ENCODE measurements at regions of chr2 and their contacts with region 1.

Region 1: DNA sequence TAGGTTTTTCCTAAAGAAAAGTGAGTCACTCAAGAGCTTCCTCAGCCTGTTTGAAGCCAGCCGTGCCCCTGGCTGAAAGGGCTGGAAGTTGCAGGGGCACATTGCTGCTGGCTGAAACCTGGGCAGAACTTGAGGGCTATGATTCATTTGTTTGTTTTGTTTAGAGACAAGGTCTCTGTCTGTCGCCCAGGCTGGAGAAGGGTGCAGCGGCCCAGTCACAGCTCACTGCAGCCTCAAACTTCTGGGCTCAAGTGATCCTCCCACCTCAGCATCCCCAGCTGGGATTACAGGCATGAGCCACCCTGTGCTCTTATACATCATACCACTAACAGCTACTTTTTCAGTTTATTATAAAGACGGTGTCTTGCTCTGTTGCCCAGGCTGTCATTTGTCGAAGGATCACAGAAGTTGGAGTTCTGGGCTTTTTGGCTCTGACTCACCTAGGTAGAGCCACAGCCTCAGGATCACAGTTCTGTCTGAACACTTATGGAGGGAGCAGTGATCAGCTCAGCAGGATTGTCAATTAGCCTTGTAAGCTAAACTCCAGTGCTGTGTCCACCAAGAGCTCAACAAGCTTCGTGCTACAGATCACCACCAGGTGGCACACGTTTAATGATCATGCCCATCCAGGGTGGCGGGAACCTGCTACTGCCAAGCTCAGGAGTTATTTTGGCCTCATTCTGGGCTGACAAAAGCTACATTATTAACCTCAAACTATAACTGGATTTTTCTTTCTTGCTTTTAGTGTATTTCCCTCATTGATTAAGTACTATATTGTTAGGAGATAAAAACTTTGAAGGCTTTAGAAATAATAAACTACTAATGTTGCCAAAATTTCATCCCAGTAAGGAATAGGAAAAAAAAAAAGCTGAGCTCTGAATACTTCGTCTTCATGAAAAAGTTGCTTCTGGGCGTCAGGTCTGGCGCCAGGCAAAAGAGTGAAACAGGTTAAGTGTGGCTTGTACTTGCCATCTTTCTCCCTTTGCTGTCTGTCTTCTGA is 57.9 kb downstream of the ARHGEF33 start:
- DNase-seq: no peak
- H3K4me3 ChIP-seq: no peak overlapping the region
- H3K27ac ChIP-seq: no peak overlapping the region
- H3K4me1 ChIP-seq: peaks cover 0 to 7% (median 0%) of the 10 kb centered on the region in 4 donors
- H3K27me3 ChIP-seq: no peaks in the 10 kb centered on the region
- CTCF ChIP-seq: peak; percentile 63 to 74 (median 65)
- EP300 ChIP-seq: no peak
- POLR2A ChIP-seq: no peak

Region 2: GRCh38 chr2:39234754-39235153 is 287.2 kb after region 1 on chr2:
- intact Hi-C with region 1: loop called (anchors 5 kb)
- DNase-seq: no peak
- H3K4me3 ChIP-seq: no peak overlapping the region
- H3K27ac ChIP-seq: no peak overlapping the region
- H3K4me1 ChIP-seq: peaks cover 3 to 5% (median 4%) of the 10 kb centered on the region in 4 donors
- H3K27me3 ChIP-seq: no peaks in the 10 kb centered on the region
- CTCF ChIP-seq: no peak
- EP300 ChIP-seq: no peak
- POLR2A ChIP-seq: no peak